ENCODE measurements at regions of chr10 and their contacts with region 1.

Region 1: DNA sequence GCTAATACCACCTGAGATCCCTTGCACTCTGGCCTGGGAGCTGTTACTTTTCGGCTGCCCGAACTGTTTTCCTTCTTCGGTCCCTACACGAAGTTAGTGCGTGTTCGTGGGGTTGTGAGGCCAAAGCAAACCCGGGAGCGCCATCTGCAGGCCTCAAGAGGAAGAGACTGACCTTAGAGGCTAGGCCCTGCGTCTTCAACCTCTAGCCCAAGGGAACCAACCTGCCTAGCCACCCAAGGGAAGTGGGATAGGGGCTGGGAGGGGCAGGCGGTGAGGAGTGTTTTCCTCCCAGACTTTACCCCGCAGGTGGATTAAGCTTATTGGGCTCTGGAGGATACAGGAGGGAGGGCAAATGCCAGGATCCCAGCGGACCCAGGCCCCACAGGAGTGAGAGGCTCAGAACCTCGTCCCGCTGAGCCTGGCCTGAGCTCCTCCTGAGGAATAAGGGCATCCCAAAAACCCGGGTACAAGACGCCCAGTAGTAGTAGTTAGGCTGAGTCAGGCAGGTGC is 1.7 kb upstream of the PAX2 start:
- DNase-seq: peak; percentile 68
- ATAC-seq: peak; percentile 64
- H3K4me3 Mint-ChIP-seq: no peak overlapping the region
- H3K27ac Mint-ChIP-seq: no peak overlapping the region
- H3K4me1 Mint-ChIP-seq: peaks cover 13% of the 10 kb centered on the region
- H3K27me3 Mint-ChIP-seq: peaks cover 92% of the 10 kb centered on the region

Region 2: DNA sequence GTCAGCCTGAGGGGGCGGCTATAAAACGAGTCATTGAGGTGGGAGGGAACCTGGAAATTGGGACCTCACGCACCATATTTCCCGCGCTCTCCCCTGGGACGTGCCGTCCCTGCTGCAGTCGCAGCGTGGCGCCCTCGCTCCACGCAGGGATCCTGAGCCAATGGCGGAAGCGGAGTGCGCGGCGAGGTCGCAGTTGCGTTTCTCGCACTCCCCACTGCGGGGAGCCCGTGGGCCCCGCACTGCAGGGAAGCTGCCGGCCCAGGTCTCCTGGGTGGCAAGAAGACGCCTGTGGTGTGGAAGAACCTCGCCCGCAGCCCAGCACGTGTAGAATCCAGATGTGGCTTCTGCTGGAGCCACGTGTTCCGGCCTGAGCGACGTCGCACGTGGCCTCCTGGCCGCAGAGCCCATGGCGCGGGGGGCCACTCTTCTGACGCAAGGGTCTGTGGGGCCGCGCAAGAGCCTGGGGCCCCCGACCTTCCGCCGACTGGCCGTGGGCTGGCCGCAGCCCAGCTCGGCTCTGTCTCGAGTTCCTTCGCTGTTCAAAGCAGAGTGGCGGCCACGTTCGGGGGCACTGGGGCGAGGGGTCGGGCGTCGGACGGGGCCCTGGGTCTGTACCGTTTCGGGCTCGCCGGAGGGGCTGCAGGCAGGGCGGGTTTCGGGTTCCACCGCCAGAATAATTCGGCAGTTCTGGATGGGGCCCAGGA is 181.5 kb before region 1 on chr10:
- POLR2A ChIA-PET with region 1: interaction called, 12 read pairs
- DNase-seq: peak; percentile 88
- ATAC-seq: peak; percentile 97
- H3K4me3 Mint-ChIP-seq: no peak overlapping the region
- H3K27ac Mint-ChIP-seq: no peak overlapping the region
- H3K4me1 Mint-ChIP-seq: peaks cover 17% of the 10 kb centered on the region
- H3K27me3 Mint-ChIP-seq: peaks cover 41% of the 10 kb centered on the region